B cell (primary cell): ENCODE measurements at regions of chr2 and their contacts with region 1.

Region 1: GRCh38 chr2:131093006-131093695 is at the start of gene FAM168B:
- DNase-seq: peak; percentile 93
- ATAC-seq: peak; percentile 76
- H3K4me3 ChIP-seq: peak within 1 kb of the TSS; percentile 67 to 99 (median 80)
- H3K4me3 Mint-ChIP-seq: peak within 1 kb of the TSS; percentile 94
- H3K27ac ChIP-seq: peak within 1 kb of the TSS; percentile 71 to 92
- H3K27ac Mint-ChIP-seq: peak within 1 kb of the TSS; percentile 93
- H3K4me1 ChIP-seq: peaks cover 7 to 16% of the 10 kb centered on the region in 2 donors
- H3K4me1 Mint-ChIP-seq: peaks cover 18% of the 10 kb centered on the region
- H3K27me3 ChIP-seq: no peaks in the 10 kb centered on the region
- H3K27me3 Mint-ChIP-seq: no peaks in the 10 kb centered on the region
- CTCF ChIP-seq: no peak
- total RNA-seq, gene FAM168B: 69.1 and 70.5 TPM in 2 replicates

Region 2: DNA sequence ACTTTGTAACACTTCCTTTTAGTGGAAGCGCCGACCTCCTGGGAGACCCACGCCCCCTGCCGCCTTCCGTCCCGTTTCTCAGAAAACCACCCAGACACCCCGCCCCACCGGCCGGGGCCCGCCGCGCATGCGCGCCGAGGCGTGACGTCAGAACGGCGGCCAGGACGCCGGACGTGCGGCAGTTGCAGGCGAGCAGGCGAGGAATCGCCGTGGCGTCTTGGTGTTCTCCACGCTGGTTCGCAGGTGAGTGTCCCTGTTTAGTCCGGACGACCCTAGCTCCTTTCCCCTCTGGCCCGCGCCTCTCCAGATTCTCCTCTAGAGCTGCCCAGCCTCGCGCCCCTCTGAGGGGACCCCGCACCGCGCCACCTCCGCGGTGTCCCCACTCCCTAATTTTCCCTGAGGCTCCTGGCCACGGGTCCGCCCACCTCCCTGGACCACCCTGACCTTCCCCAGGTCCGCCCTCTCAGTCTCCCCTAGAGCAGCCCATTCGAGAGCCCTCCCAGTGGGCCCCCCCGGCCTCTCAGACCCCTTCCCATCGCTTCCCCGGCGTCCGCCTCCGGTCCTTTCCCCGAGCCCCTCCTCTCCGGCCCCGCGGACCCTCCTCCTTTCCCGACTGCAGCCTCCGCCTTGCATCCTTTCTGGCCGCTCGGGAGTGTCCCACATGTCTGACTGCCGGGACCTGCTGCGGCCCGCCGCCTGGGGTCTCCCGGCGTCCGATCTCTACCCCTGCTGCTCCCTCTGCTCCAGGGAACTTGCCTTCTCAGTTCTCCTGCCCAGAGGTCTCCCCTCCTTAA is 12.2 kb after region 1 on chr2 and contains the start of gene PLEKHB2:
- CTCF ChIA-PET with region 1: interaction called, 26 read pairs
- POLR2A ChIA-PET with region 1: interaction called, 37 read pairs
- intact Hi-C with region 1: loop called (anchors 1 kb)
- DNase-seq: peak; percentile 95
- ATAC-seq: peak; percentile 88
- H3K4me3 ChIP-seq: peak within 1 kb of the TSS; percentile 47 to 99 (median 91)
- H3K4me3 Mint-ChIP-seq: peak within 1 kb of the TSS; percentile 97
- H3K27ac ChIP-seq: peak within 1 kb of the TSS; percentile 80 to 91
- H3K27ac Mint-ChIP-seq: peak within 1 kb of the TSS; percentile 93
- H3K4me1 ChIP-seq: peaks cover 19 to 20% of the 10 kb centered on the region in 2 donors
- H3K4me1 Mint-ChIP-seq: peaks cover 44% of the 10 kb centered on the region
- H3K27me3 ChIP-seq: no peaks in the 10 kb centered on the region
- H3K27me3 Mint-ChIP-seq: no peaks in the 10 kb centered on the region
- CTCF ChIP-seq: no peak
- total RNA-seq, gene PLEKHB2: 39.5 and 42.1 TPM in 2 replicates